CD8-positive, alpha-beta T cell (primary cell): ENCODE measurements at regions of chr1 and their contacts with region 1.

Region 1: DNA sequence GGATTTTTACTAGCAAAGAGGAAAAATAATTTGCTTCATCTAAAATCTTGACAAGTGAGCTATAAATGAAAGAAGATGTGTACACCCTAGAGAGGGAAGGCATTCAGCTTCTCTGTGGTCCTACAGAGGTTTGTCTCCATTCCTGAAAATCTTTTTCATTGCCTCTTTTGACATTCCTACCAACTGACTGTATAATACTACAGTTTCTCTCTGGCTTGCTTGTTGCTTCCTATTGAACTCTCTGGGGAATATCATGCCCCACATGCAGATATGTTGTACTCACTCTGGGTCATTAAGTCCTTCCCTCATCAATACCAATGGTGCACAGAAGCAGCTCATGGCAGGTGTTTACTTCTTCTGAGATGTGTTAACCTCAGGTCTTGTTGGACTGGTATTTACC is 371.2 kb upstream of the PLXNA2 start:
- DNase-seq: no peak
- ATAC-seq: no peak
- H3K4me3 ChIP-seq: no peak overlapping the region
- H3K4me3 Mint-ChIP-seq: no peak overlapping the region
- H3K27ac ChIP-seq: no peak overlapping the region
- H3K27ac Mint-ChIP-seq: no peak overlapping the region
- H3K4me1 ChIP-seq: no peaks in the 10 kb centered on the region
- H3K4me1 Mint-ChIP-seq: no peaks in the 10 kb centered on the region
- H3K27me3 ChIP-seq: no peaks in the 10 kb centered on the region
- H3K27me3 Mint-ChIP-seq: no peaks in the 10 kb centered on the region
- CTCF ChIP-seq: no peak

Region 2: GRCh38 chr1:208604295-208604694 is 11.1 kb before region 1 on chr1:
- CTCF ChIA-PET with region 1: interaction called, 3 read pairs
- POLR2A ChIA-PET with region 1: no interaction called
- intact Hi-C with region 1: loop called in 1 of 2 experiments (anchors 1 kb)
- DNase-seq: no peak
- ATAC-seq: no peak
- H3K4me3 ChIP-seq: no peak overlapping the region
- H3K4me3 Mint-ChIP-seq: no peak overlapping the region
- H3K27ac ChIP-seq: no peak overlapping the region
- H3K27ac Mint-ChIP-seq: no peak overlapping the region
- H3K4me1 ChIP-seq: no peaks in the 10 kb centered on the region
- H3K4me1 Mint-ChIP-seq: no peaks in the 10 kb centered on the region
- H3K27me3 ChIP-seq: no peaks in the 10 kb centered on the region
- H3K27me3 Mint-ChIP-seq: peaks cover 3% of the 10 kb centered on the region
- CTCF ChIP-seq: no peak